ENCODE measurements at regions of chr14 and their contacts with region 1.

Region 1: DNA sequence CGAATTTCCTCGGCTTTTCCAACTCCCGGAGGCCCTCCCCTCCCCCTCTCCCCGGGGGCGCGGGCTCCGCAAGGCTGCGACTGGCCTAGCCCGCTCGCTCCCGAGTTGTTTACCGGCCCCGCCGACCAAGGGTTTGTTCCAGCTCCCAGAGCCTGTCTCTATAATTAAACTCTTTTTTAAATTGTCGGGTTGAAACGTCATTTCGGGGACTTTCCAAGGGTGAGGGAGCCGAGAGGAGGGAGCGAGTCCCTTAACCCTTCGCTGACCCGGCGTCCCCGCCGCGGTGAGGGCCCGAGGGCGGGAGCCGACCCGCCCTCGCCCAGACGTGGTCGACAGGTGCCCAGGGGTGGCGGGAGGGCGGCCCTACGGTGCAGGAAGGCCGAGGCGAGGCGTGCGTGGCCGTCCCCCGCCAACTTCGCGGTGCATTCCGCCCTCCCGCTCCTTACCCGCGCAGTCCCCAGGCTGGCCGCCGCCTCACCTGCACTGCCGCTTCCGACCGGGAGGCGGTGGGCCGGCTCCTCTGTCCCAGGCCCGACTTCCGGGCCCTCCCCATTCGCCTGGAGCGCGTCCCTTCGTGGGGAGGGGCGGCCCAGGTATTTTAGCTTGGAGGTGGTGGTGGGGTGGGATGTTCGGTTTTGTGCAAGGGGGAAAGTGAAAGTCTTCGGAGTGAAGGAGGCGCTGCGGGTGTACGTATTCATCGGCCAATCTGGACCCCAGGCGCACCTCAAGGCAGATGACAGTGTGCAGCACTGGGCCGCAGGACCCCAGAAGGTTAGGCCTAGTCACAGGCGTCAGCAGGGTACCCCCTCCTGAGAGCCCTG is 2.9 kb upstream of the ZFP36L1 start:
- DNase-seq: peak; percentile 86 to 87
- H3K4me3 ChIP-seq: peak overlapping the region; percentile 79 to 99 (median 94)
- H3K27ac ChIP-seq: peak overlapping the region; percentile 98
- H3K4me1 ChIP-seq: peaks cover 5 to 14% (median 6%) of the 10 kb centered on the region in 4 experiments; a peak in 6 of 7 replicates
- H3K27me3 ChIP-seq: no peaks in the 10 kb centered on the region
- CTCF ChIP-seq: peak; percentile 56 to 75 (median 58)
- EP300 ChIP-seq: no peak
- POLR2A ChIP-seq: peak; percentile 83 to 86
- RAD21 ChIP-seq: peak; percentile 37 to 56

Region 2: GRCh38 chr14:68627880-68628607 is 167.8 kb before region 1 on chr14:
- CTCF ChIA-PET with region 1: no interaction called
- POLR2A ChIA-PET with region 1: interaction called, 10 read pairs
- DNase-seq: peak; percentile 73 to 91
- H3K4me3 ChIP-seq: peak overlapping the region; percentile 24 to 58 (median 34); a peak in 7 of 8 replicates
- H3K27ac ChIP-seq: peak overlapping the region; percentile 16; the same call in 1 of the 2 replicates
- H3K4me1 ChIP-seq: peaks cover 6 to 16% (median 9%) of the 10 kb centered on the region in 4 experiments; a peak in 5 of 7 replicates
- H3K27me3 ChIP-seq: no peaks in the 10 kb centered on the region; a peak in 1 of 7 replicates
- CTCF ChIP-seq: no peak
- EP300 ChIP-seq: no peak
- POLR2A ChIP-seq: peak in 1 of 2 experiments; percentile 66; a peak in 1 of 3 replicates
- RAD21 ChIP-seq: peak in 1 of 2 experiments; percentile 24; a peak in 1 of 4 replicates

Region 3: GRCh38 chr14:68730811-68731425 is 64.9 kb before region 1 on chr14:
- CTCF ChIA-PET with region 1: interaction called, 3 read pairs
- POLR2A ChIA-PET with region 1: interaction called, 16 read pairs
- DNase-seq: peak in 1 of 2 experiments; percentile 63
- H3K4me3 ChIP-seq: peak overlapping the region in 3 of 4 experiments; percentile 4 to 42 (median 26); a peak in 4 of 8 replicates
- H3K27ac ChIP-seq: no peak overlapping the region; the same call in 1 of the 2 replicates
- H3K4me1 ChIP-seq: peaks cover 4 to 12% (median 10%) of the 10 kb centered on the region in 4 experiments; a peak in 6 of 7 replicates
- H3K27me3 ChIP-seq: no peaks in the 10 kb centered on the region
- CTCF ChIP-seq: no peak
- EP300 ChIP-seq: no peak
- POLR2A ChIP-seq: no peak
- RAD21 ChIP-seq: no peak; a peak in 1 of 4 replicates

Region 4: DNA sequence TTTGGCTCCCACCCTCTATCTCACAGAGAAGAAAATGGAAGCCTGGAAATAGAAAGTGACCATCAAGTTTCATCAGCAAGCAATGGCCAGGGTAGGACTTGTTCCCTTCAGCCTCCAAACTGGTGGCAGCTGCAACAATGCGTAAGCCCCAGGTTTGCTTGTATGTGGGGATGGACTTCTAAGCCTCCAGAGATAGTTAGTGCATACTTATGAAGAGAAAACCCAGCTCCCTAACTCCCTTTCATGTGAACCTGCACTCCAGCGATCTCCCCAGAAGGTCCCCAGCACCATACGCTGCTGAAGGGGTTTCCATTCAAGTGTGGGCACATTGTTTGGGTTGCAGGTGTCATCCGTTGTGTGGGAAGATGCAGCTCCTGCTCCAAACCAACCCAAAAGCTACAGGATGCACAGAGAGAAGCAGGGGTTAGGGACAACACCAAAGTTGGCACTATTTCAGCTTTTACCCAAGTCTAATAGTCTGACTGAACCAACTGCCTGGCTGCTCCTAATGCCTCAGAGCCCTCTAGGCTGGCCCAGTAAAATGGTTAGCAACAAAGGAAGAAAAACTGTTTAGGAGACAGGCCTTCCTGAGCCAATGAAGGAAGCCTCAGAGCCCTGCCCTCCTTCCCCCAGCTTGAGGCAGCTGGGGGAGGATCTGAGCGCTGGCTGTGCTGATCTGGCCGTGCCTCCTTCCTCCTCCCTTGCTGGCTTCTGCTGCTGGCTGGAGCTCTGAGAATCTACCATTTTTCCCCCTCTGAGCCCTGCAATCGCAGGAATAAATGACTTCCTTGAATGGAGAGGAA is 15.2 kb before region 1 on chr14:
- CTCF ChIA-PET with region 1: interaction called, 3 read pairs
- POLR2A ChIA-PET with region 1: interaction called, 197 read pairs
- DNase-seq: no peak
- H3K4me3 ChIP-seq: no peak overlapping the region
- H3K27ac ChIP-seq: no peak overlapping the region
- H3K4me1 ChIP-seq: peaks cover 0 to 5% (median 0%) of the 10 kb centered on the region in 4 experiments; a peak in 2 of 7 replicates
- H3K27me3 ChIP-seq: no peaks in the 10 kb centered on the region
- CTCF ChIP-seq: no peak
- EP300 ChIP-seq: no peak
- POLR2A ChIP-seq: no peak
- RAD21 ChIP-seq: no peak

Region 5: DNA sequence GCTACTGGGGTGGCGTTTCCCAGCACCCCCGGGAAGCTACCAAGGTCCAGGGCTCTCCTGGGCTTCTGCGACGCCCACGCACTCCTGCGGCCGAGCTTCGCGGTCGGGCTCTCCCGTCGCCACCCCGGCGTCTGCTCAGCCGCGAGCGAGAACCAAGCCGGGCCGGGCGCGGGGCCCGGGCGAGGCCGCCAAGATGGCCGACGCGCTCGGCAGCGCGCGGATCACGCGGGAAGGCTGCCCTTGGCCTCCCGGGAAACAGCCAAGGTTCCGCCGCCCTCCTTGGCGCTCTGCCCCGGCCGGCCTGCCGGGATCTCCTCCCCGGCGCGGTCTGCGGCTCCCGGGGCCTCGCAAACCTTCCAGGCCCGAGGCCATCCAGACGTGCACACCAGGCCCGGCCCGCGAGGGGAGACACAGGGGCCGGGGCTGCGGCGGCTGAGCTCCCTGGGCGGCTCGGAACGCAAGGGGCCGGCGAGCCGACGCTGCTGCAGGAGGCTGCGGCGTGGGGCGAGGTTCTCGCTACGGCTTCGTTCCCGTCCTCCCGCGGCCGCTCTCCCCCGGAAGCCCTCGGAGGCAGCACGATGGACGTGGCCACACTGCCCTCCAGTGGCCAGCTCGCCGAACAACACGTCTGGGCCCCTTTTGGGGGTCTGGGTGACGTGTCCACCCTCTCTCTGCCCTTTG is 20.6 kb after region 1 on chr14:
- CTCF ChIA-PET with region 1: interaction called, 60 read pairs
- POLR2A ChIA-PET with region 1: interaction called, 222 read pairs
- DNase-seq: peak in 1 of 2 experiments; percentile 99
- H3K4me3 ChIP-seq: peak overlapping the region; percentile 3 to 59 (median 44); a peak in 7 of 8 replicates
- H3K27ac ChIP-seq: peak overlapping the region; percentile 76; the same call in 1 of the 2 replicates
- H3K4me1 ChIP-seq: peaks cover 6 to 37% (median 28%) of the 10 kb centered on the region in 4 experiments
- H3K27me3 ChIP-seq: peaks cover 0 to 3% (median 2%) of the 10 kb centered on the region in 4 experiments; a peak in 2 of 7 replicates
- CTCF ChIP-seq: peak; percentile 89 to 97 (median 91)
- EP300 ChIP-seq: no peak
- POLR2A ChIP-seq: peak in 1 of 2 experiments; percentile 40; a peak in 2 of 3 replicates
- RAD21 ChIP-seq: peak; percentile 99 to 100

Region 6: DNA sequence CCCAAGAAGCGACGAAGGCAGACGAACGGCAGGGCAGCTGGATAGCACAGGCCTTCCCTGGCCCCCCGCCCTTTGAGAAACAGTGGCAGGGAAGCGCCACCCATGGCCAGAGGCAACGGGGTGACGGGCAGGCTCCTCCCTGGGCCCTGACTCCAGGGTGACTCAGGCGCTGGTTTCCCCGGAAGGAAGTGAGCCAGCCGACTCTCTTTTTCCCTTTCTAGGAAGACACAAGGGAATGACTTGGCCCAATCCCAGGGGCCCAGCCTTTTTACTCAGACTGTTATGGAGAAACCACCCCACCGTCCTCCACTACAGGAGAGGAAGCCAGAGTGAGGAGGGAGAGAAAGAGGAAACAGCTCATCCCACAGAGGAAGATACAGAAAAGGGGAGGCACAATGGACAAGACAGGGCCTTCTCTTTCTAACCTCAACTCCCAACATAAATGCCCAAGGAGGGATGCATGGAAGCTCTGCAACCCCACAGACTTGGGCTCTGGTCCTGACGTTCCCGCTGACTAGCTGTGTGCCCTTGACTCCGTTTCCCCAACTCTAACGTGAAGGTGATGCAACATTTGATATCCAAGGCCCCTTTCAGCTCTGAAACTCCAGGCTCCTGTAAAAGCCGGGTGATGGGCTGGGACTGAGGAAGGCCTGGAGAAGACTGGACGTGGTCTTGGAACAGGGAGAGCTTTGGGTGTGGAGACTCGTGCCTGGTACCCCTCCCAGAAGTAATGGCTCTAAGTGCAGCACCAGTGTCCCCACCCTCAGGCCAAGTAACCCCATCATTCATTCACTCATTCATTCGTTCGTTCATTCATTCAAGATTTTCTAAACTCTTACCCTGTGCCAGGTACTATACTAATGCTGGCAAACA is 155.5 kb after region 1 on chr14:
- CTCF ChIA-PET with region 1: no interaction called
- POLR2A ChIA-PET with region 1: no interaction called
- DNase-seq: no peak
- H3K4me3 ChIP-seq: no peak overlapping the region
- H3K27ac ChIP-seq: no peak overlapping the region
- H3K4me1 ChIP-seq: peaks cover 0 to 10% (median 6%) of the 10 kb centered on the region in 4 experiments; a peak in 6 of 7 replicates
- H3K27me3 ChIP-seq: no peaks in the 10 kb centered on the region
- CTCF ChIP-seq: no peak
- EP300 ChIP-seq: no peak
- POLR2A ChIP-seq: no peak; a peak in 1 of 3 replicates
- RAD21 ChIP-seq: no peak

Measured in H1 (cell line).